ENCODE measurements at regions of chr10 and their contacts with region 1.

Region 1: GRCh38 chr10:77251297-77252013 is 386.2 kb downstream of the KCNMA1 start:
- DNase-seq: no peak
- H3K4me3 ChIP-seq: no peak overlapping the region
- H3K27me3 ChIP-seq: no peaks in the 10 kb centered on the region
- CTCF ChIP-seq: peak; percentile 69

Region 2: GRCh38 chr10:77165445-77166208 is 85.8 kb before region 1 on chr10:
- CTCF ChIA-PET with region 1: interaction called, 11 read pairs
- POLR2A ChIA-PET with region 1: no interaction called
- DNase-seq: no peak
- H3K4me3 ChIP-seq: no peak overlapping the region
- H3K27me3 ChIP-seq: no peaks in the 10 kb centered on the region
- CTCF ChIP-seq: peak; percentile 77

Region 3: DNA sequence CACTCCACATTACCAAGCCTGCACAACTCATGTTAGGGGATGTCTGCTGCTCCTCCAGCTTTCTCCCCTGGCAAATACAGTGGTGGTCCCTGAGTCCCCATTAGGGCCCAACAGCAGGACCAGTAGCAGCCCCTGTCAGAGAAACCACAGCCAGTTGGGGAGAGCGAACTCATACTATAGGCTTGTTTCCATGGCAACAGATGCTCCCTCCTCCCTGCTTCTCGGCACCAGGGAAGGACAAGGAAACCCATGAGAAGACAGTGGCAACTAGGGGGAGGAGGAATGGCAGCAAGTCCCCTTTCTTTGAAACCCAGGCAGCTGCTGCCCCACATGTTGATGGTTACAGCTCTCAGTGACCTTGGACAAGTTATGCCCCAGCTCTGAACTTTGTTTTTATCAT is 59.7 kb after region 1 on chr10:
- CTCF ChIA-PET with region 1: no interaction called
- POLR2A ChIA-PET with region 1: no interaction called
- DNase-seq: no peak
- H3K4me3 ChIP-seq: no peak overlapping the region
- H3K27me3 ChIP-seq: no peaks in the 10 kb centered on the region
- CTCF ChIP-seq: no peak

Region 4: DNA sequence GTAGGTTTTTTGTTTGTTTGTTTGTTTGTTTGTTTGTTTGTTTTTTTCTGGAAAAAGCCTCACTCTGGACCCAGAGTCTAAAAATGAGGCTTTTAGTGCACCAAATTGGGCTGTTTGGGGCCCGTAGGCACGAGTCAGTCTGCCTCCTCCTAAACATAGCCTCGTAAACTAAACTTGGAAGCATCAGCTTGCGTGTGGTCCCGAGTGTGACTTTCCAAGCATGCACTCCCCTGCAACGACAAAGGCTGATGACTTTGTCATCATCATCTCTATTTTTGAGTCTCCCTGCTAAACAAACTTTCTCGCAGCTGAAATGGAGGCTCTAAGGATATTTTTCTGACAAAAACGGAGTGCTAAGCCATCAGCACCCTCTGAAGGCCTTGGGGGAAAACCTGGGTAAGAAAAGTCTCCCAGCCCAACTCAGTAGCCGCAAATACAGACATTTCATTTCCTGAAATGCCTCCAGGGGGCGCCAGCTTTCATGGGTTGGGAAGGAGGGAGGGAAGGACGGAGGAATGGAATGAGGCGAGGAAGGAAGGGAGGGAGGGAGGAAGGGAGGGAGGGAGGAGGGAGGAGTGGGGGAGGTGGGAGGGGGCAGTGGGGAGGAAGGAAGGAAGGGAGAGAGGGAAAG is 140.3 kb after region 1 on chr10:
- CTCF ChIA-PET with region 1: interaction called, 20 read pairs
- POLR2A ChIA-PET with region 1: interaction called, 3 read pairs
- DNase-seq: peak; percentile 51
- H3K4me3 ChIP-seq: no peak overlapping the region
- H3K27me3 ChIP-seq: no peaks in the 10 kb centered on the region
- CTCF ChIP-seq: peak; percentile 80